Posterior vena cava (tissue), 2 donors: ENCODE measurements at regions of chr1 and their contacts with region 1.

Region 1: DNA sequence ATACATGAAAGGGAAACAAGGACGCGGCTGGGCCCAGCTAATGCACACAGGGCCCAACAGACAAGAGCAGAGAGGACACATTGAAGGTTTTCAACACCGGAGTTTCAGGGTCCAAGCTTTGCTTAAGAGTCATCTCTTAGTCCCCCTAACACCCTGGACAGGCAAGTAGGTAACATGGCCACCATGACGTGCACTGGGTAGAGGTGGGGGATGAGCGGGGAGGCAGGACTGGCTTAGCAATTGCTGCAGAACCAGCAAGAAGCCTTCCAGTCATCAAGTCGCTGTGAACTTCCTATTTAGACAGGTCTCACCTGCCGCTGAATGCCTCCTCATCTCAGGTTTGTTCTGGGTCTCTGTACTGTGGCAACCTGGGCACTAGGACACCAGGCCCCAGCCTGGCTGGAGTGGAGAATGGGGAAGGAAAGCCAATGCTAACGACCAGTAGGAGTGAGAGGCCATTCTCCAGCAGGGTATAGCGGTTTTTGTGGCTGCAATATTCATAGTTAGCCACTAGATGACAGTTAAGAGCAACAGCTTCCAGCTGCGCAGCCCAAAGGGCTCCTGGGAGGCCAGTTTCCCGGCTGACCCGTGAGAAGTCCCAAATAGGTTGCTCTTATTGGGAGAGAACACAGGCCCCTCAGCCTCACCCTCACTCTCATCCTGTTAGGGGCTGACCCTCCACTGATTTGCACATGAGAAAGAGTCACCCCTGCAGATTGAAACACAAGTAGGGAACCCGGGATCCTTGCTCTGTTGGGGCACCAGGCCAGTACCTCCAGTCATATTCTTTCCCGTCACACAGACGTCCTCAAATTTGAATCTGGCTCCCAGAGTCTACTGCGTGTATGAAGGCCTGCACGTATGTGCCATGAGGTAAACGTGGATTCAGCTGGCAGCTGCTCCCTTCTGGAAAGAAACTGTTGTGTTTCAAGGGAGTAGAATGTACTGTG is 6.0 kb upstream of the PIGC start:
- DNase-seq: peak; percentile 85

Region 2: DNA sequence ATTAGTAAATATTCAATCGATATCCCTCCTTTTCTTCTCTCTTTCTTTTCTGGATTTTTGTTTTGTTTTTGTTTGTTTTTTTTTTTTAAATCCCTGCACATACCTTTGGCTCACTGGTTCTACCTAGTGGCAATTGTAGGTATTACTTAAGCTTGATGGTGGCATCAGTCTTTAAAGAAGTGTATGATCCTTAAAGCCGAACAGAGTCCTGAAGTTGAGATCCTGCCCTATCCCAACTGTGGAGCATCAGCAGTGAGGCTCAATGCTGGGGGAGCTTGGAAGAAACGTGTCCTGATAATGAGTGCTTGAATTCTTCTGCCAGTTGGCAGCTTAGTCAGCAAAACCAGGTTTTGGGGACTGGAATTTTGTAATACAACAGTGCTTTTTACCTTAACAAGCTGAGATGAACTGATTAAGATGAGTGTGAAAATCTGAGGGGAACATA is 269.9 kb after region 1 on chr1:
- intact Hi-C with region 1: loop called in 1 of 2 experiments (anchors 10 kb)
- DNase-seq: no peak